PC-3 (cell line): ENCODE measurements at regions of chr2 and their contacts with region 1.

Region 1: DNA sequence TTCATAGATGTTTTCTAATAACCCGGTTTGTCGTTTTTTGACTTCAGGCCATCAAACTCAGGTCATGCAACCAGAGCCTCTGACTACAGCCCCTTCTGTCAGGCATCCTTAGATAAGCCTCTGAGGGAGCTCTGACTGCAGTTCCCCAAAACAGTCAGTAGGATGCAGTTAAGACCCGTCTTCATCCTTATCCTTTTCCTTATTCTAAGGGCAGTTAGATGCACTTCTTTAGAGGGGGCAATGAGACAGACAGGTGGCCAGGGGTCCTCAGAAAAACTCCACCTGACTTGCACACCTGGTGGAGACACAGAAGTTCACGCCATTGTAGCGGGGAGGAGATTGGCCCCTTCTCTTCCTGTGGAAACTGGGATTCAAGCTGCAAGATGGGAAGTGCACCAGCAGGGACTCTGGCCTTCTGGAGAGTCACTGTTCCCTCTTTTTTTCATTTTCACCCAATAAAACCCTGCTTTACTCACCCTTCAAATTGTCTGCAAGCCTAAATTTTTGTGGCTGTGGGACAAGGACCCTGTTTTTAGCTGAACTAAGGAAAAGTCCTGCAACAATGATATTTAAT is 104.8 kb upstream of the TFPI start:
- DNase-seq: peak; percentile 51
- ATAC-seq: peak; percentile 86
- H3K4me3 ChIP-seq: no peak overlapping the region
- H3K27ac ChIP-seq: no peak overlapping the region
- H3K4me1 ChIP-seq: no peaks in the 10 kb centered on the region
- H3K27me3 ChIP-seq: 0 out of 2 replicates have a peak, but pooled peaks cover 4% of the 10 kb centered on the region
- CTCF ChIP-seq: peak; percentile 63

Region 2: GRCh38 chr2:187842978-187843847 is 184.2 kb after region 1 on chr2:
- CTCF ChIA-PET with region 1: interaction called, 3 read pairs
- POLR2A ChIA-PET with region 1: no interaction called
- intact Hi-C with region 1: loop called (anchors 1 kb)
- DNase-seq: peak; percentile 86
- ATAC-seq: peak; percentile 79
- H3K4me3 ChIP-seq: no peak overlapping the region
- H3K27ac ChIP-seq: no peak overlapping the region
- H3K4me1 ChIP-seq: no peaks in the 10 kb centered on the region
- H3K27me3 ChIP-seq: no peaks in the 10 kb centered on the region
- CTCF ChIP-seq: peak; percentile 79